ENCODE measurements at regions of chr4 and their contacts with region 1.

Region 1: GRCh38 chr4:15956179-15956850 is 6.7 kb downstream of the FGFBP2 start:
- DNase-seq: peak; percentile 87
- H3K4me3 Mint-ChIP-seq: no peak overlapping the region
- H3K27ac Mint-ChIP-seq: no peak overlapping the region
- H3K4me1 Mint-ChIP-seq: no peaks in the 10 kb centered on the region
- H3K27me3 Mint-ChIP-seq: peaks cover 4% of the 10 kb centered on the region

Region 2: GRCh38 chr4:15479089-15479912 is 477.0 kb before region 1 on chr4:
- CTCF ChIA-PET with region 1: interaction called, 4 read pairs
- POLR2A ChIA-PET with region 1: no interaction called
- intact Hi-C with region 1: loop called (anchors 5 kb)
- DNase-seq: no peak
- H3K4me3 Mint-ChIP-seq: no peak overlapping the region
- H3K27ac Mint-ChIP-seq: no peak overlapping the region
- H3K4me1 Mint-ChIP-seq: no peaks in the 10 kb centered on the region
- H3K27me3 Mint-ChIP-seq: no peaks in the 10 kb centered on the region

Region 3: GRCh38 chr4:15729910-15730533 is 226.3 kb before region 1 on chr4:
- CTCF ChIA-PET with region 1: interaction called, 7 read pairs
- POLR2A ChIA-PET with region 1: no interaction called
- intact Hi-C with region 1: loop called (anchors 1 kb)
- DNase-seq: peak; percentile 15
- H3K4me3 Mint-ChIP-seq: no peak overlapping the region
- H3K27ac Mint-ChIP-seq: no peak overlapping the region
- H3K4me1 Mint-ChIP-seq: no peaks in the 10 kb centered on the region
- H3K27me3 Mint-ChIP-seq: peaks cover 2% of the 10 kb centered on the region

Region 4: GRCh38 chr4:15805583-15806517 is 150.5 kb before region 1 on chr4:
- CTCF ChIA-PET with region 1: interaction called, 94 read pairs
- POLR2A ChIA-PET with region 1: no interaction called
- intact Hi-C with region 1: loop called (anchors 1 kb)
- DNase-seq: peak; percentile 43
- H3K4me3 Mint-ChIP-seq: no peak overlapping the region
- H3K27ac Mint-ChIP-seq: no peak overlapping the region
- H3K4me1 Mint-ChIP-seq: peaks cover 12% of the 10 kb centered on the region
- H3K27me3 Mint-ChIP-seq: no peaks in the 10 kb centered on the region

Region 5: GRCh38 chr4:15888515-15888914 is 67.8 kb before region 1 on chr4:
- CTCF ChIA-PET with region 1: interaction called, 145 read pairs
- POLR2A ChIA-PET with region 1: no interaction called
- intact Hi-C with region 1: no loop called
- DNase-seq: no peak
- H3K4me3 Mint-ChIP-seq: no peak overlapping the region
- H3K27ac Mint-ChIP-seq: no peak overlapping the region
- H3K4me1 Mint-ChIP-seq: no peaks in the 10 kb centered on the region
- H3K27me3 Mint-ChIP-seq: peaks cover 10% of the 10 kb centered on the region

Region 6: DNA sequence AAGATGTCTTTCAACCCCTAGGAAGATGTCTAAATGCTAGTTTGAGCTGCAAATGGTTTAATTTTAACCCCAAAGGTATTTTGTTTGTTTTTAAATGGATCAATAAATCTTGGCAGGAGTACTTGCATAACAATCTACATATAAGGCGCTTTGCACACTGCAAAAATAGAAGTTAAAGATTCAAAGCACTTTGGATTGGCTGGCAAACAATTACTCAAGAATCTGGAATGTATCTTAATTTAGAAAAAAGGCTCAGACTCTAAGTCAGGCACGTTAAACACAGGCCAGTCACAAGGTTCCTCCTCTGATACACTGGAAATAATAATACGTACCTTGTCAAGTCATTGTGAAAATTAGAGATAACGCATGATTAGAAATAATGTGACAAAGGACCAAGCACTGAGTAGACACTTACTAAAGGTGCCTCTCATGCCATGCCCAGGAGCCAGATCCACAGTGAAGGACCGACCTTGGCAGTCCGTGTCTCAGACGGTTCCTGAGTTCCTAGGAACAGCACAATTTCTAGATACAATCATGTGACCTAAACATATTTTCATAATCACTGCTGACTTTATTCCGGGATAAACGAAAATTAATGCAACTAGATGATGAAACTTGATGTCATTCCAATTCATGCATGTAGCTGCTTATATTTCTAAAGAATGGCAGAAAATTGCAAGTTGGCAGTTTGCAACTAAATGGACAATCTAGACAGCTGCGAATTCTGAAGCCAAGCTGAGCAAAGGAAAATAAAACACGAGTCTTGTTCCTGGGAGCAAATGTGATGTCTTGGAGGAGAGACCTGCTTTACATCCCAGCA is 77.9 kb after region 1 on chr4:
- CTCF ChIA-PET with region 1: no interaction called
- POLR2A ChIA-PET with region 1: no interaction called
- intact Hi-C with region 1: no loop called
- DNase-seq: no peak
- H3K4me3 Mint-ChIP-seq: no peak overlapping the region
- H3K27ac Mint-ChIP-seq: no peak overlapping the region
- H3K4me1 Mint-ChIP-seq: no peaks in the 10 kb centered on the region
- H3K27me3 Mint-ChIP-seq: no peaks in the 10 kb centered on the region